ENCODE measurements at regions of chr4 and their contacts with region 1.

Region 1: DNA sequence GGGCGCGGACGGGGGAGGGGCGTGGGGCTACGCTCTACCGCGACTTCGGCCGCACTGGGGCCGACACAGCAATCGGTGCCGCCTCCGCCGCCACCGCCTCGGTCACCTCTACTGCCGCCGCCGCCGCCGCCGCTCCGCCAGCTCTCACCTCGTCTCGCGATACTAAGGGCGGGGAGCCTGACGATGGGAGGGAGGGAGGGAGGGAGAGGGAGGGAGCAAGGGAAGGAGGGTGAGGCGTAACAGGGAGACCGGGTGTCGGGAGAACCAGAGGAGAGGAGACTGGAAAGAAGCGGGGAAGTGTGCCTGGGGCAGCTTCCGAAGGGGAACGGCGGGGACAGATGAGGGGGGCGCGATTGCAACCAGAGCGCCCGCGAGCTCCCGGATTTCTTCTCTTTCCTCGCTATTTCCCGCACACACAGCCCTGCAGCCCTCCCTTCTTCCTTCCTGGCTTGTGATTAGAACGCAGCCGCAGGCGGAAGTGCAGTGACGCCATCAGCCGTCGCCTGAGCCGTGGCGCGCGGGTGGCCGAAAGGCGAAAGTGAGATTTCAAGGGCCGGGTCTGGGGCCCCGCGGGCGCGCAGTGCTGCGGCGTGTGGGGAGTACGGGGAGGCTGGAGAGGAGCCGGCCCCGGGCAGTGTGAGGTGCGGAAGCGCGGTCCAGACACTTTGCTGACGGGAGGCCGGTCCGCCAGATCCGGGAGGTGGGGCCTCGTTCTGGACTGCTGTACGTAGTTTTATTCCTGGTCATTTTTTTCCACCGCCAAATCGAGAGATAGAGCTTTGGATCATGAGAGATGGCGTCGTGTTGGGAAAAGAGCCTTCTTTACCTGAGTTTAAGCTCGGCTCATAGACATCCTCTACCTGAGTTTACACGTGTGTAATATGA is at the start of gene ANKRD17:
- DNase-seq: peak; percentile 93 to 95
- ATAC-seq: peak; percentile 66 to 87 (median 81)
- H3K4me3 ChIP-seq: peak within 1 kb of the TSS; percentile 90
- H3K4me3 Mint-ChIP-seq: peak within 1 kb of the TSS; percentile 100
- H3K27ac ChIP-seq: peak within 1 kb of the TSS; percentile 98
- H3K27ac Mint-ChIP-seq: peak within 1 kb of the TSS; percentile 99 to 100
- H3K4me1 ChIP-seq: peaks cover 18% of the 10 kb centered on the region
- H3K4me1 Mint-ChIP-seq: peaks cover 61% of the 10 kb centered on the region in 2 donors
- H3K27me3 ChIP-seq: no peaks in the 10 kb centered on the region
- H3K27me3 Mint-ChIP-seq: no peaks in the 10 kb centered on the region
- CTCF ChIP-seq: no peak
- total RNA-seq, gene ANKRD17: 51.8 to 70.2 (median 63.0) TPM

Region 2: GRCh38 chr4:72701987-72702819 is 556.7 kb before region 1 on chr4:
- intact Hi-C with region 1: loop called (anchors 5 kb)
- DNase-seq: peak in 1 of 2 donors; percentile 58
- ATAC-seq: peak in 1 of 3 donors; percentile 53
- H3K4me3 ChIP-seq: peak overlapping the region; percentile 15
- H3K4me3 Mint-ChIP-seq: peak overlapping the region; percentile 66
- H3K27ac ChIP-seq: no peak overlapping the region
- H3K27ac Mint-ChIP-seq: no peak overlapping the region
- H3K4me1 ChIP-seq: no peaks in the 10 kb centered on the region
- H3K4me1 Mint-ChIP-seq: no peaks in the 10 kb centered on the region
- H3K27me3 ChIP-seq: no peaks in the 10 kb centered on the region
- H3K27me3 Mint-ChIP-seq: no peaks in the 10 kb centered on the region
- CTCF ChIP-seq: peak; percentile 31

Region 3: GRCh38 chr4:73069338-73070073 is 189.4 kb before region 1 on chr4 and contains the start of gene COX18:
- intact Hi-C with region 1: loop called (anchors 1 kb)
- DNase-seq: peak; percentile 97 to 99
- ATAC-seq: peak; percentile 77 to 93 (median 81)
- H3K4me3 ChIP-seq: peak within 1 kb of the TSS; percentile 89
- H3K4me3 Mint-ChIP-seq: peak within 1 kb of the TSS; percentile 97
- H3K27ac ChIP-seq: peak within 1 kb of the TSS; percentile 98
- H3K27ac Mint-ChIP-seq: peak within 1 kb of the TSS; percentile 97 to 99
- H3K4me1 ChIP-seq: peaks cover 9% of the 10 kb centered on the region
- H3K4me1 Mint-ChIP-seq: peaks cover 32 to 36% of the 10 kb centered on the region in 2 donors
- H3K27me3 ChIP-seq: no peaks in the 10 kb centered on the region
- H3K27me3 Mint-ChIP-seq: no peaks in the 10 kb centered on the region
- CTCF ChIP-seq: no peak
- total RNA-seq, gene COX18: 9.6 to 10.3 (median 9.7) TPM

Region 4: DNA sequence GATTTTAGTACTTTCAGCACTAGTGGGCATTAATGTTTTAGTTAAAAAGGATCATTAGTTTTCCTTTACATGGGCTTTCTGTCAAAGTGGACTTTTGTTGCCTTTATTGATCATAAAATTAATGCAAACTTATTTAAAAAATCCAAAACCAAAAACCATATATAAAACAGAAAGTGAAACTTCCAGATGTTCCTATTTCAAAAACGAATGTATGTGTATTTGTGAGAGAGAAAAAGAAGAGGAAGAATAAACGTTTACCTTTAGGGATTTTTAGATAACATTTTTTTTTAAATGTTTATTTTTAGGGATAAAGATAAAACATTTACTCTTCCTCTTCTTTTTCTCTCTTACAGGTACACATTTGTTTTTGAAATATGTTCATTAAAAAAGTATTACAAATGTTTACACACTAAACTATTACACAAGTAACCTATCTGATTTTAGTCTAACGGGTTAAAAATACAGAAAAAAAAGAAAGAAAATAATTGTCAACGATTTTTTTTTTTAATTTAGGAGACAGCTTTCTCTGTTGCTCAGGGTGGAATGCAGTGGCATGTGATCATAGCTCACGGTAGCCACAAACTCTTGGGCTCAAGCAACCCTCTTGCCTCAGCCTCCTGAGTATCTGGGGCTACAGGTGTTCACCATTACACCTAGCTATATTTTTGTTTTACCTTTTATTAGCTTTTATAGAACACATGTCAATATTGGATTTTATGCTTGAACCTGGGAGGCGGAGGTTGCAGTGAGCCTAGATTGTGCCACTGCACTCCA is 172.6 kb before region 1 on chr4:
- intact Hi-C with region 1: loop called (anchors 5 kb)
- DNase-seq: peak in 1 of 2 donors; percentile 52
- ATAC-seq: peak in 2 of 3 donors; percentile 58 to 75
- H3K4me3 ChIP-seq: peak overlapping the region; percentile 41
- H3K4me3 Mint-ChIP-seq: peak overlapping the region; percentile 83
- H3K27ac ChIP-seq: peak overlapping the region; percentile 56
- H3K27ac Mint-ChIP-seq: peak overlapping the region; percentile 17 to 82
- H3K4me1 ChIP-seq: peaks cover 8% of the 10 kb centered on the region
- H3K4me1 Mint-ChIP-seq: peaks cover 0 to 8% of the 10 kb centered on the region in 2 donors
- H3K27me3 ChIP-seq: no peaks in the 10 kb centered on the region
- H3K27me3 Mint-ChIP-seq: no peaks in the 10 kb centered on the region
- CTCF ChIP-seq: no peak

Region 5: DNA sequence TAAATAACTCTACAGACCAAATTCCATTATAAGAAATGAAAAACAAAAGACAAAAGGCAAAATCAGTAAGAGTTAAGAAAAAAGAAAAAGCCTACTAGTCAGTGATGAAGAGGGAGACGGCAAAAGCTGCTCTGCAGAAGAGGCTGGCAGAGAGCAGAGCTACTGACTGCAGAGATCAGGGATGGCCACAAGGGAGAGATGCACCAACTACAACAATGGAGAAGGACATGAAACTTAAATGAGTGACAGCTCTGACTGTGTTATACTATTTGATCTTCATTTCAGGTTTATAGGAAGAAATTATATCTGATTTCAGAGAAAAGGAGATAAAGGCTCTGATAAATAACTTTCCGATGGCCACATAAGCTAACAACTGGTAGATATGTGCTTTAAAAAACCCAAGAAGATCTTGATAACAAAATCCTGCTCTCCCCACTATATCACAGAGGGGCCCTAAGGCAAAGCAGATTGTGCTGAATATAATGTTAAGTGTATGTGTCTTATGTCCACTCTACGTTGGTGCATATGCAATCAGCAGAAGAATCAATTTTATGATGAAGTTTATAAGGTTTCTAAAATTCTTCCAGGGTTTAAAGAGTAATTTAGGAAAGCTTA is 131.0 kb before region 1 on chr4:
- intact Hi-C with region 1: loop called (anchors 5 kb)
- DNase-seq: peak in 1 of 2 donors; percentile 51
- ATAC-seq: peak in 2 of 3 donors; percentile 54 to 56
- H3K4me3 ChIP-seq: no peak overlapping the region
- H3K4me3 Mint-ChIP-seq: no peak overlapping the region
- H3K27ac ChIP-seq: no peak overlapping the region
- H3K27ac Mint-ChIP-seq: peak overlapping the region; percentile 1 to 56
- H3K4me1 ChIP-seq: no peaks in the 10 kb centered on the region
- H3K4me1 Mint-ChIP-seq: peaks cover 0 to 10% of the 10 kb centered on the region in 2 donors
- H3K27me3 ChIP-seq: no peaks in the 10 kb centered on the region
- H3K27me3 Mint-ChIP-seq: no peaks in the 10 kb centered on the region
- CTCF ChIP-seq: peak; percentile 11

Region 6: GRCh38 chr4:73142995-73143547 is 115.9 kb before region 1 on chr4:
- intact Hi-C with region 1: loop called (anchors 5 kb)
- DNase-seq: no peak
- ATAC-seq: no peak
- H3K4me3 ChIP-seq: no peak overlapping the region
- H3K4me3 Mint-ChIP-seq: no peak overlapping the region
- H3K27ac ChIP-seq: no peak overlapping the region
- H3K27ac Mint-ChIP-seq: no peak overlapping the region
- H3K4me1 ChIP-seq: no peaks in the 10 kb centered on the region
- H3K4me1 Mint-ChIP-seq: no peaks in the 10 kb centered on the region
- H3K27me3 ChIP-seq: no peaks in the 10 kb centered on the region
- H3K27me3 Mint-ChIP-seq: no peaks in the 10 kb centered on the region
- CTCF ChIP-seq: peak; percentile 39

Region 7: DNA sequence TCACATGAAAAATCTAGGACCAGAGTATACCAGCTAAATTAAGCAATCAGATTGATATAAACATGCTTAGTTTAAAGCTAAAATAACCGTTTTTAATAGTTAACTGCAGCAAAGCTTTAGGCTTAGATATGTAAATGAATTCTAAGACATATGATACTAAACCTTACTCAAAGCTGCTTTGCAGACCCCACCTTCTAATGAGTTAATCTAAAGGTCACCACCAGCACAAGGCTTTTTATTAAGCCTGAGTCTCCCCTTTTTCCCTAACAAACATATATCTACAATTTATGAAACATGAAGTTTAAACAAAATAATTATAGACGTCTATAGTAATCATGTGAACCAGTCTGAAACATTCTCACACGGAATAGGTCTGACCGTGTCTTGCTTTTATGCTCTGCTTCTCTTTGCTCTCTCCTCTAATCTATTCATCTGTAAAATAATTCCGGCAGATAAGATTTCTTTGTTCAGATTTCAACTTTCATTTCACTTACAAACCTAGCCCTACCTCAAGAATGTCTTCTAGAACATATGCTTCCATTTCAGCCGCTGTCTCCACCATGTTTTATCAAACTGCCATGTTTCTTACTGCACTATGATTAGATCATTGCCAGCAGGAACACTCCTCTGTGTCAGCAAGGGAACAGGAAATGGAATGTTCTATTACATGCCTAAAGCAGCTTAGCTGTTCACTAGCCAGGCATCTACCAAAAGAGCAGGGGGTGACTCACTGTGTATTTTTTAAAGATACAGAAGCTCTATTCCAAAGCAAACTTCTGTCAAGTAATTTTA is 36.3 kb before region 1 on chr4:
- intact Hi-C with region 1: loop called (anchors 1 kb)
- DNase-seq: peak; percentile 34 to 87
- ATAC-seq: peak; percentile 100
- H3K4me3 ChIP-seq: peak overlapping the region; percentile 53
- H3K4me3 Mint-ChIP-seq: no peak overlapping the region
- H3K27ac ChIP-seq: peak overlapping the region; percentile 94
- H3K27ac Mint-ChIP-seq: no peak overlapping the region
- H3K4me1 ChIP-seq: peaks cover 4% of the 10 kb centered on the region
- H3K4me1 Mint-ChIP-seq: peaks cover 17 to 21% of the 10 kb centered on the region in 2 donors
- H3K27me3 ChIP-seq: no peaks in the 10 kb centered on the region
- H3K27me3 Mint-ChIP-seq: no peaks in the 10 kb centered on the region
- CTCF ChIP-seq: no peak